OCI-LY7 (cell line): ENCODE measurements at regions of chr5 and their contacts with region 1.

Region 1: GRCh38 chr5:54310433-54311175 is at the start of gene ARL15:
- DNase-seq: peak; percentile 97
- H3K4me3 ChIP-seq: peak within 1 kb of the TSS; percentile 81
- H3K27ac ChIP-seq: peak within 1 kb of the TSS; percentile 41
- H3K4me1 ChIP-seq: peaks cover 20% of the 10 kb centered on the region
- CTCF ChIP-seq: no peak
- total RNA-seq, gene ARL15: 24.4 and 27.7 TPM in 2 replicates

Region 2: DNA sequence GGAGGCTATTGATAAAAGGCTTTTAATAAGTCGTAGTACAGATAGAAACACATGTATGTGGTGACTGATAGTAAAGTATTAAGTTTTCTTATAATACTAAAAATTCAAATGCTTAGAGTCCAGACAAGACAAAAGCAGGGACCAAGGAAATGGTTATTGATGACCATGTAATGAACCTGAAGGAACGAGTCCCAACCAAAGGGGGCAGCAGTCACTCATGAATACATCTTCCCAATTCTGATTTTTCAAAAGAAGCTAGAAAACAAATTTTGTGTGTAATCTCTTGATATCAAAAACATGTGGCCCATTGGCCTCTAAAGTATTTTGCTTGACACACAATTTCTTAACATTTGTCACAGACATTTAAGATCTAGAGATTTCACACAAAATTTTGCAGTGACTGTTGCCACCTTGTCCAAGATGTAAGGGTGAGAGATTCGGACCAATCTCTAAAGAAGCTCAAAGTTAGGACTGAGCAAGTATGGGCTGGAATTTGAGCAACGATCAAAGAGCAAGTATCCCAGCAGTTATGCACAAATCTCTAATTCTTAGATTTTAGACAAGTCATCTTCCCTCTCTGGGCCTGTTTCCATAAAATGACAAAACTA is 67.0 kb before region 1 on chr5:
- CTCF ChIA-PET with region 1: interaction called, 3 read pairs
- POLR2A ChIA-PET with region 1: interaction called, 3 read pairs
- intact Hi-C with region 1: loop called (anchors 2 kb)
- DNase-seq: peak; percentile 46
- H3K4me3 ChIP-seq: no peak overlapping the region
- H3K27ac ChIP-seq: no peak overlapping the region
- H3K4me1 ChIP-seq: no peaks in the 10 kb centered on the region
- CTCF ChIP-seq: peak; percentile 92

Region 3: GRCh38 chr5:54295651-54296276 is 14.8 kb before region 1 on chr5:
- CTCF ChIA-PET with region 1: interaction called, 6 read pairs
- POLR2A ChIA-PET with region 1: interaction called, 19 read pairs
- intact Hi-C with region 1: no loop called
- DNase-seq: peak; percentile 5
- H3K4me3 ChIP-seq: peak overlapping the region; percentile 7
- H3K27ac ChIP-seq: peak overlapping the region; percentile 34
- H3K4me1 ChIP-seq: peaks cover 36% of the 10 kb centered on the region
- CTCF ChIP-seq: no peak

Region 4: DNA sequence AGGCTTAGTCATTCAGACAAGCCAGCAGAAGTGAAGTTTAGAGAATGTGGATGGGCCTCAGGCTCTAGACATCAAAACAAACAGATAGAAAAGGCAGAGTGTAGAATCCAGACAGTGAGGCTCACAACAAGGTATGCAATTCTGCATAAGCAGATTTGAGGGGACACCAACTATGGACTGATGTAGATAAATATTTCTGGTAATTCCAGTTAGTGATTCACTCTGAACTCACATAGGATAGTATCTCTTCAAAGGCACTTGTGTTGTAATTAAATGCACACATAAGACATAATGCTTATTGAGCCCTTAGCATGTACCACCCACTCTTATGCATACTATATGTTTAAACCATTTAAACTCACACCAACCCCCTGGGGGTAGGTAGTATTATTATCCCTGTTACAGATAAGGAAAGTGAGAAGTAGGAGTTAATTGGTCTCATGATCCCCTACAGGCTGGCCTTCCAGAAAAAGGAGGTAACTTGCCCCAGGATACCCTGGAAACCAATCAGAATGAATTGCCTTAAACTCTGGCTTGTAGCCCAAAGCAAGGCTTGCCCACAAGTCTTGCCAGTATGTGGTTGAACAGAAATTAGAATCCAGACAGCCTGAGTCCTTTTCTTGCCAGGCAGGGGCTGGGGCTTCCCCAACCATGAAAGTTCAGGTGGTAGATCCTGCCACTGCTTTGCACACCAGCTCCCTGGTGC is 105.4 kb after region 1 on chr5:
- CTCF ChIA-PET with region 1: no interaction called
- POLR2A ChIA-PET with region 1: no interaction called
- intact Hi-C with region 1: loop called (anchors 5 kb)
- DNase-seq: no peak
- H3K4me3 ChIP-seq: no peak overlapping the region
- H3K27ac ChIP-seq: no peak overlapping the region
- H3K4me1 ChIP-seq: no peaks in the 10 kb centered on the region
- CTCF ChIP-seq: no peak

Region 5: GRCh38 chr5:54443270-54443669 is 132.7 kb after region 1 on chr5:
- CTCF ChIA-PET with region 1: interaction called, 5 read pairs
- POLR2A ChIA-PET with region 1: interaction called, 12 read pairs
- intact Hi-C with region 1: no loop called
- DNase-seq: peak; percentile 63
- H3K4me3 ChIP-seq: no peak overlapping the region
- H3K27ac ChIP-seq: no peak overlapping the region
- H3K4me1 ChIP-seq: peaks cover 33% of the 10 kb centered on the region
- CTCF ChIP-seq: peak; percentile 85

Region 6: GRCh38 chr5:54480296-54480695 is 169.7 kb after region 1 on chr5:
- CTCF ChIA-PET with region 1: no interaction called
- POLR2A ChIA-PET with region 1: no interaction called
- intact Hi-C with region 1: loop called (anchors 5 kb)
- DNase-seq: no peak
- H3K4me3 ChIP-seq: no peak overlapping the region
- H3K27ac ChIP-seq: no peak overlapping the region
- H3K4me1 ChIP-seq: no peaks in the 10 kb centered on the region
- CTCF ChIP-seq: no peak